K562 (cell line): ENCODE measurements at regions of chr14 and their contacts with region 1.

Region 1: DNA sequence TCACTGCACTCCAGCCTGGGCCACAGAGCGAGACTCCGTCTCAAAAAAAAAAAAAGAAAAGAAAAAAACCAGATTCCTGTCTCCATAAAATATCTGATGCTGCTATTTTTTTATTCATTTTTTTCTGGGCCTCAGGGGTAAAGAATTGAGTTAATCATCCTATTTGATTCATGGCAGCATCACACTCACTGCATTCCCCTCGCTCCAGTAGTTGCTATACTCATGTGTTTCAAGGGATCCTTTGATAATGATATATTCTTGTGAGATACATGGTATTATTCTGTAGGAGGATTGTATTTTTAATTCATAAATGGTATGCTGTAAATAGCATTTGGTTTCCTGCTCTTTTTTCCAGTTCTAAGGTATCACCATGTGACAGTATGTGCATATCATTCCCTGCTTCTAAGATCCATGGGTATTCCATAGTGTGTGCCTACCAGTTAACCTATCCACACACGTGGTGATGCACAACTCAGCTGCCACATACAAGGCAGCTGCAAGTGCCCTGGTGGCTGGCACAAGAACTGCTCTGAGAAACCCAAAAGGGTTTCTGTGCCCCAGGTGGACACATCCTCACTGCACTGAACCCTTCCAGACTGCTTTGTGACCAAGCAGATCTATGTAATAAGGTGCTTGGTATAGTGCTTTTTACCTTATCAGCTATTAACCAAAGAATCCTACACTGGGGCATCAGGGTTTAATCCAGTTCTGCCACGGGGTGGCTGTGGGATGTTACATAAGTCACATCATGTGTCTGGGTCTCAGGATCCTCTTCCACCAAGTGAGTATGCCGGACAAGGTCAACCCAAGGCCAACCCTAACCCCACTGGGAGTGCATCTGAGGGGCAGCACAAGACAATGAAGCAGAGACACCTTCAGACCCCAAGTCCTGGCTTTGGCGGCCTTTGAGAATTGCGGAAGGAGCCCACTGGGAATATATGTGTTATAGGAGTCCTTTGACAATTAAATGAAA is 74.6 kb downstream of the ZFP36L1 start:
- DNase-seq: no peak
- ATAC-seq: no peak
- H3K4me3 ChIP-seq: no peak overlapping the region
- H3K27ac ChIP-seq: no peak overlapping the region
- H3K4me1 ChIP-seq: peaks cover 3 to 34% of the 10 kb centered on the region in 2 experiments; a peak in 3 of 5 replicates
- H3K27me3 ChIP-seq: no peaks in the 10 kb centered on the region
- CTCF ChIP-seq: 0 out of 6 replicates have a peak, but pooled peaks of 1 of the 3 experiments have one; percentile 21
- EP300 ChIP-seq: no peak
- POLR2A ChIP-seq: no peak
- RAD21 ChIP-seq: no peak

Region 2: DNA sequence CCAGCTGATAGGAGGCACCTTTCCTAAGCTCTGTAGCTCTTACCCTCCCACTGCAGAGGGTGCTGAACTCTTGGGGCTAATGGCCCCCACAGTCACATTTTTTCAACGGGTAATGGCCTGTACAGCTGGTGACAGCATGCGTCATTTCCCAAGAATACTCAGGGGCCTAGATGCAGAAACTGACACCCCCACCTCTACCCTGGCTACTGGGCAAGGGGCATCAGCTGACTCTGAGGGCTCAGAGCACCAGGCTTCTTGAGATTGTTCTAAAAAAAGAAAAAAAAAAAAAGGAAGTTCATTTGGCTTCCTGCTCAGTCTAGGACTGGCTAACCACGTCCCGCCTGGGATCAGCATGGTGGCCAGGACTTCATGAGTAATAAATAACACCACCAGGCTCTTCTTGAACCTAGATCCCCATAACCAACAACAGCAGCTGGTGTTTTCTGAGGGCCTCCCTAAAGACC is 39.3 kb after region 1 on chr14:
- CTCF ChIA-PET with region 1: no interaction called
- POLR2A ChIA-PET with region 1: no interaction called
- in situ Hi-C with region 1: loop called (anchors 5 kb)
- intact Hi-C with region 1: loop called (anchors 5 kb)
- DNase-seq: peak; percentile 34 to 69 (median 37)
- ATAC-seq: peak; percentile 69
- H3K4me3 ChIP-seq: no peak overlapping the region
- H3K27ac ChIP-seq: peak overlapping the region; percentile 78
- H3K4me1 ChIP-seq: peaks cover 31 to 66% of the 10 kb centered on the region in 2 experiments
- H3K27me3 ChIP-seq: no peaks in the 10 kb centered on the region
- CTCF ChIP-seq: peak in 2 of 3 experiments; percentile 4 to 11; a peak in 1 of 6 replicates
- EP300 ChIP-seq: no peak
- POLR2A ChIP-seq: no peak
- RAD21 ChIP-seq: peak; percentile 20 to 36; a peak in 2 of 4 replicates

Region 3: GRCh38 chr14:68780358-68781160 is 62.2 kb after region 1 on chr14:
- CTCF ChIA-PET with region 1: no interaction called
- POLR2A ChIA-PET with region 1: no interaction called
- in situ Hi-C with region 1: loop called (anchors 5 kb)
- intact Hi-C with region 1: no loop called
- DNase-seq: peak; percentile 39 to 82 (median 58)
- ATAC-seq: peak; percentile 88
- H3K4me3 ChIP-seq: no peak overlapping the region
- H3K27ac ChIP-seq: peak overlapping the region; percentile 78
- H3K4me1 ChIP-seq: peaks cover 19 to 49% of the 10 kb centered on the region in 2 experiments
- H3K27me3 ChIP-seq: no peaks in the 10 kb centered on the region
- CTCF ChIP-seq: no peak
- EP300 ChIP-seq: no peak
- POLR2A ChIP-seq: no peak
- RAD21 ChIP-seq: no peak

Region 4: DNA sequence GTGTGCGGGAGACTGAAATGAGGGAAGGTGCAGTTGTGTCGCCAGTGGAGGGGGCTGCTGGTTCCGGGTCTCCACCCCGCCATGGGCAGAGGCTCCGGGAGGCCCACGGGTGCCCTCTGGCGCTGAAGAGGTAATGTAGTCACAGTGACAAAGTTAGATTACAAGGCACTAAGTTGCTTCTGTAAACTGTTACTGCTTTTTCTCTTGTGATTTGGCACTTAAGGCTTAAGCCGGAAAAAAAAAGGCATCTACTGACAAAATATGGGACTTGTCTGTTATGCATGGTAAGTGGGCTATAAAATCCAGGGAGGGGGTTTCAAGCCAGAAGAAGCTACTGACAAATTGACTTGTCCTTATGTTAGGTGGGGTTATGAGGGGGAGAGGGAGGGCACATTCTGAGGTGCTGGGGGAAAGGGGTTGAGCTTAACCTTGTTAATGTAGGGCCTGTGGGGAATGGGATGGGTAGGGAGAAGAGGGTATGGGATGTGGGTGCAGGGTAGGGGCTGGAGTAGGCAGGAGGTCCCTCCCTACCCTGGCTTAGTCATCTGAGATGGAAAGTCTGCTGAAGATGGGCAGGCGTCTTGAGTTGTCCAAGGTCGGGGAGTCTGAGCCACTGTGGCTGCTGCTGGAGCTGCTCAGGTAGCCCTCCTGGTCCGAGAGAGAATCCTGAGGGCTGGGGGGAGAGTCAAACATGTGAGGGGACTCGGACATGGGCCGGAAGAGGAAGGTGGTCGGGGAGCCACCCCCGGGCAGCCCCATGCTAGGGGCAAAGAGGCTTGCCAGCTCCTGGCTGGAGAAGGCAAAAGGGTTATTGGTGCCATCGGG is 70.9 kb after region 1 on chr14:
- CTCF ChIA-PET with region 1: no interaction called
- POLR2A ChIA-PET with region 1: interaction called, 5 read pairs
- in situ Hi-C with region 1: loop called (anchors 5 kb)
- intact Hi-C with region 1: loop called (anchors 1 kb)
- DNase-seq: peak; percentile 65 to 78 (median 70)
- ATAC-seq: peak; percentile 64
- H3K4me3 ChIP-seq: no peak overlapping the region
- H3K27ac ChIP-seq: no peak overlapping the region; the same call in 2 of the 3 replicates
- H3K4me1 ChIP-seq: peaks cover 25 to 30% of the 10 kb centered on the region in 2 experiments; a peak in 4 of 5 replicates
- H3K27me3 ChIP-seq: no peaks in the 10 kb centered on the region
- CTCF ChIP-seq: peak; percentile 80 to 99 (median 93)
- EP300 ChIP-seq: no peak
- POLR2A ChIP-seq: no peak
- RAD21 ChIP-seq: peak; percentile 90 to 96